ENCODE measurements at regions of chr13 and their contacts with region 1.

Region 1: GRCh38 chr13:96020155-96020575 is 33.0 kb downstream of the UGGT2 start:
- H3K4me3 ChIP-seq: no peak overlapping the region
- H3K27ac ChIP-seq: no peak overlapping the region
- H3K4me1 ChIP-seq: peaks cover 4% of the 10 kb centered on the region; the same call in 1 of the 2 replicates
- CTCF ChIP-seq: no peak

Region 2: DNA sequence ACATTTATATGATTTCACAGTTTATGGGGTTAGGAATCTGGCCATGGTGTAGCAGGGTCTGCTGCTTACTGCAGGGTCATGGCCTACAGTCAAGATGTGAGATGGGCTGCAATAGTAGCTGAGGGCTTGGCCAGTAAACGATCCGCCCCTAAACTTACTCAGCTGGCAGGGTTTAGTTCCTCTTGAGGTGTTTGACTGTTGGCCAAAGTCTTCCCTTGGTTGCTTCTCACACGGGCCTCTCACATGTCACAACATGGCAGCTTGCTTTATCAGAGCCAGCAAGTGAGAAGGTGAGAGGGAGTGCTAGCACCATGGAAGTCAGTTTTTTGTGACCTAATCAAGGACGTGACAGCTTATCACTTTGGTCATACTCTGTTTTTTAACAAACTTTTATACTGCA is 266.1 kb before region 1 on chr13:
- CTCF ChIA-PET with region 1: no interaction called
- POLR2A ChIA-PET with region 1: no interaction called
- H3K4me3 ChIP-seq: no peak overlapping the region
- H3K27ac ChIP-seq: no peak overlapping the region
- H3K4me1 ChIP-seq: no peaks in the 10 kb centered on the region
- CTCF ChIP-seq: no peak

Region 3: GRCh38 chr13:95906999-95907398 is 113.2 kb before region 1 on chr13:
- CTCF ChIA-PET with region 1: no interaction called
- POLR2A ChIA-PET with region 1: no interaction called
- H3K4me3 ChIP-seq: no peak overlapping the region
- H3K27ac ChIP-seq: no peak overlapping the region
- H3K4me1 ChIP-seq: no peaks in the 10 kb centered on the region
- CTCF ChIP-seq: no peak

Region 4: GRCh38 chr13:96817336-96817941 is 797.3 kb after region 1 on chr13:
- CTCF ChIA-PET with region 1: interaction called, 40 read pairs
- POLR2A ChIA-PET with region 1: no interaction called
- H3K4me3 ChIP-seq: no peak overlapping the region
- H3K27ac ChIP-seq: no peak overlapping the region
- H3K4me1 ChIP-seq: no peaks in the 10 kb centered on the region
- CTCF ChIP-seq: no peak